Panc1 (cell line): ENCODE measurements at regions of chr9 and their contacts with region 1.

Region 1: DNA sequence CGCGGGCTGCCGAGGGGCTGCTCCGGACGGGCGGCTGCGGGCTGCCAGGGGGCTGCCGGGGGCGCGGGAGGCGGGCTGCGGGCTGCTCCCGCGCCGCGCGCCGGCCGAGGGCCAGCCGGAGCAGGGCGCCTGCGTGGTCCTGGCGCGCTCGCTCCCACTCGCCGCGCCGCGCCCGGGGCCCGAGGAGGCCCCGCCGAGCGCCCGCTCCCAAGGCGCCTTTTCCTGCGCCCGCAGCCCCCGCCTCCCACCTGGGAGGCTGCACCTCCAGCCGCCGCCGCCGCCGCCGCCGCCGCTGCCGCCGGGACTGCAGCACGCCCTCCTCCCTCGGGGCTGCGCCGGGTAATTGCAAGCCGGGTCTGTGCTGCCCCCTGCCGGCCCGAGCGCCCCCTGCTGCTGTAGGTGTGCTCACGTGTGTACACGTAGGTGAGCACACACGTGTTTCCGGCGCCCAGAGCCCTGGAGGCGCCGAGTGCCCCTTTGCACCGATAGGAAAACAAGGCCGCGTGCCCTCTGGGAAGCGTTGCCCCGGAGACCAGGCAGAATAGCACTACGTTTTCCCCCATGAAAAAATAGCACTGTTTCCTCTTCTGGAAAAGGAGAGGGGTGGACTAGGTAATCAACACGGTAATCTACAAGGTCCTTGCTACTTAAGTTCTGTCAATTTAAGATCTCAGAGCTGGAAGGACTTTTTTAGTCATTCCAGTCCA is at the start of gene EPB41L4B:
- DNase-seq: peak; percentile 48
- ATAC-seq: peak; percentile 83
- H3K4me3 ChIP-seq: peak within 1 kb of the TSS; percentile 53 to 61
- H3K27ac ChIP-seq: peak within 1 kb of the TSS; percentile 90
- H3K4me1 ChIP-seq: peaks cover 22% of the 10 kb centered on the region
- H3K27me3 ChIP-seq: no peaks in the 10 kb centered on the region
- CTCF ChIP-seq: peak; percentile 90
- total RNA-seq, gene EPB41L4B: 27.8 TPM

Region 2: DNA sequence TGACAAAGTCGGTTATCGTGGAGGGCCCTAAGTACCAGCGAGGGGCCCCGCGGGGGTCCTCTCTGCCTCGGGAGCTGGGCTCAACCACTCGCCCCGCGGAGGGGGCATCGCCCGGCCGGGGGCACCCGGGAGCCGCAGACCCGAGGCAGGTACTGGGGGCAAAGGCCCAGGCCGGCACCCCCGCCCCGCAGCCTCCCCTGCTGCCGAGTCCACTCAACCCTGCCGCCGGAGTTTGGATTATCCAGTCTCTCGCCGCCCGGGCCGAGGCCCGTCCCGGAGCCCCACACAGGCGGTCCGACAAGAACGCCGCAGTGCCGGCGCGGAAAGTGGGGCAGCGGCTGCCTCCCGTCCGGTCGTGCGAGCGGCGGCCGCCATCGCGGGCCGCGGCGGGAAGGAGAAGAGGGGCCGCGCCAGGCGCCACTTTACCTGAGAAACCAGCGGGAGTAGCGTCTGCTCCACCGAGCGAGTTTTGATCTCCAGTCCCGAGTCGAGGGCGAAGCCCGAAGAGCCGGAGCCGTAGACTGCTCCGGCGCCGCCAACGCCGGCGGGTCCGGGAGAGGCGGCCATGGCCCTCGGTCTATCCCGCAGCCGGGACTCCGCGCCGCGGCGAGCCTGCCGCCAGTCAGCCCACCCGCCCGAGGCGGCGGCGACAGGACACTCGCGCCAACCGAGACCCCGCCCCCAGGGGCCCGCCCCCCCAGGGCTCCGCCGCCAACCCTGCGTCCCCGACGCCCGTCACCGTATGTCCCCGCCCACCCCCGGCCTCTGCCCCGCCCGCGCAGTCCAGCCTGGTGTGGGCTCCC is 307.8 kb before region 1 on chr9 and contains the start of gene CTNNAL1:
- CTCF ChIA-PET with region 1: no interaction called
- POLR2A ChIA-PET with region 1: no interaction called
- in situ Hi-C with region 1: no loop called
- intact Hi-C with region 1: loop called (anchors 5 kb)
- DNase-seq: no peak
- ATAC-seq: peak; percentile 92
- H3K4me3 ChIP-seq: peak within 1 kb of the TSS; percentile 75 to 78
- H3K27ac ChIP-seq: peak within 1 kb of the TSS; percentile 79
- H3K4me1 ChIP-seq: peaks cover 31% of the 10 kb centered on the region
- H3K27me3 ChIP-seq: no peaks in the 10 kb centered on the region
- CTCF ChIP-seq: no peak
- total RNA-seq, gene CTNNAL1: 79.8 TPM

Region 3: DNA sequence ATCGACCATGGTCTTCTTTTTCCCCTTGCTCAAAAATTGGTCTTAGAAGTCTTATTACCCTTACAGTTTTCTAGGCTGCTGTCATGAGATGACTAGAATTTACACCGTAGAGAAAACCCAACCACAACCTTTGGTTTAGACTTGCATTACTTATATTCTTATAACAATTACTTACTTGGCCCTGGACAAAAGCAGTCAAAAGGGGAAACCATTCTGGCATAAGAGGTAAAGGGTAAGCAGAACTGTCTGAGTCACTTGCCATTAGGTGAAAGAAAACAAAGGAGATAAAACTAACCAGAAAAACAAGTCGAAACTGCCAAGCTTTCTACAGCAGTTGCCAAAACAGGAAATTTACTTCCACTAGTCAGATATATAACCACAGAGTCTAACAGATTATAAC is 219.1 kb before region 1 on chr9:
- CTCF ChIA-PET with region 1: no interaction called
- POLR2A ChIA-PET with region 1: no interaction called
- in situ Hi-C with region 1: no loop called
- intact Hi-C with region 1: loop called (anchors 5 kb)
- DNase-seq: no peak
- ATAC-seq: peak; percentile 53; the same call in 1 of the 2 replicates
- H3K4me3 ChIP-seq: no peak overlapping the region; a peak in 1 of 4 replicates
- H3K27ac ChIP-seq: peak overlapping the region; percentile 76
- H3K4me1 ChIP-seq: peaks cover 56% of the 10 kb centered on the region
- H3K27me3 ChIP-seq: no peaks in the 10 kb centered on the region
- CTCF ChIP-seq: no peak

Region 4: DNA sequence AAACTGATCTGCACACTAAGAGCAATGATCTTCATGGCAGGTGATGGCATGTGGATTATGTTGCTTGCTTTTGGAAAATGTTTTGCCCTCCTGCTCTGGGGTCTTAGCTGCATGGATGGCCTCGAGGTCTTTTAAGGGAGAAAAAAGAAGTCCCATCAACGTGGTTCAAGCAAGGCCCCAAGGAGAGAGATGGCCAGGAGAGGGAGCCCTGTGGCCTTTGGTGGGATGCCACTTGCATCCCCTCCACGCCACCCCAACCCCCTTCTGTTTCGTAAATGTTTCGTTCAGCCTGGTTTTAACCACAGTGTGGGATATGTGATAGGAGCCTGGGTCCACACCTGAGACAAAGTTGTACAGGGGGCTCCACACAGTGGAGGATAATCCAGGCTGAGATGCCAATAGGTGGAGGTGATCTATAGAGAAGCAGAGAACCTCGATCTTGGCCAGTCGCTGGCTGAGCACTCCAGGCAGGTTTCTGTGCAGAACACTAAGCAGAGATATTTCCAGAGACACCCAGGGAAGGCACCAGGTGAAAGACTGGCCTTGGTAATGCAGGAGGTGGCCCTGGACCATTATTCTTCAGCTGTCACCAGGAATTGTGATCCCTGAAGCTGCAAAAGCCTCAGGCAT is 128.0 kb before region 1 on chr9:
- CTCF ChIA-PET with region 1: no interaction called
- POLR2A ChIA-PET with region 1: no interaction called
- in situ Hi-C with region 1: no loop called
- intact Hi-C with region 1: loop called (anchors 5 kb)
- DNase-seq: no peak
- ATAC-seq: peak; percentile 66; the same call in 1 of the 2 replicates
- H3K4me3 ChIP-seq: no peak overlapping the region
- H3K27ac ChIP-seq: no peak overlapping the region
- H3K4me1 ChIP-seq: no peaks in the 10 kb centered on the region
- H3K27me3 ChIP-seq: no peaks in the 10 kb centered on the region
- CTCF ChIP-seq: peak; percentile 59

Region 5: GRCh38 chr9:109253703-109254284 is 67.1 kb before region 1 on chr9:
- CTCF ChIA-PET with region 1: no interaction called
- POLR2A ChIA-PET with region 1: no interaction called
- in situ Hi-C with region 1: no loop called
- intact Hi-C with region 1: loop called (anchors 2 kb)
- DNase-seq: peak; percentile 69
- ATAC-seq: peak; percentile 82
- H3K4me3 ChIP-seq: no peak overlapping the region
- H3K27ac ChIP-seq: peak overlapping the region; percentile 93
- H3K4me1 ChIP-seq: peaks cover 64% of the 10 kb centered on the region
- H3K27me3 ChIP-seq: no peaks in the 10 kb centered on the region
- CTCF ChIP-seq: peak; percentile 32; the same call in 1 of the 2 replicates